Lower leg skin (tissue), 4 donors: ENCODE measurements at regions of chr1 and their contacts with region 1.

Region 1: DNA sequence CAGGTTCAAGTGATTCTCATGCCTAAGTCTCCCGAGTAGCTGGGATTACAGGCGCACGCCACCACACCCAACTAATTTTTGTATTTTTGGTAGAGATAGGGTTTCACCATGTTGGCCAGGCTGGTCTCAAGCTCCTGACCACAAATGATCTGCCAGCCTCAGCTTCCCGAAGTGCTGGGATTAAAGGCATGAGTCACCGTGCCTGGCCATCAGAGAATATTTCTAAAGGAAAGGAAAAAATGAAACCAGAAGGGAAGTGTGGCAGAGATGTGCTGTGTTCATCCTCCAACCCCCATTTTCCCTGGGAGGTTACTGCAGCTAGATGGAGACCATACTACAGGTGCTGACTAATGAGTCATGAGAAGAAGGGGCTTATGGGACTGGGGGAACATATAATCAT is 964.1 kb downstream of the TTLL7 start:
- DNase-seq: no peak
- H3K4me3 ChIP-seq: no peak overlapping the region
- CTCF ChIP-seq: no peak
- POLR2A ChIP-seq: no peak

Region 2: DNA sequence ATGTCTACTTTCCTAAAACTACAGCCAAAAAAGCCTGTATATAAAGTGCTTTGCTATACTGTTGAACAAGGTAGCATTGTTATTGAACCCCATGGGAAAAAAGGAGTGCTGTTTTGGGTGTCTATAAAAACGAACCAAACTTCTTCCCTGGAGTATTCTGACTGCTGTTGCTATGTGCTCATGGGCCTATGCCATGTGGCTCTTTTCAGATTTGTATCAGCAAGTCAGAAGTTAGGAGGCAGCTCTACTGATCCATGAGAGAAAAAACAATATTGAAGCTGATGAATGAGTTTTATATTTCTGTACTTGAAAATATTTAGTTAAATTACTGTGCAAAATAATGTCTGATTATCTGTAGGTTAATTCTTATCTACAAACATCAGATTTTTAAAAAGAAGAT is 1167.6 kb before region 1 on chr1:
- intact Hi-C with region 1: loop called (anchors 5 kb)
- DNase-seq: no peak
- H3K4me3 ChIP-seq: no peak overlapping the region
- CTCF ChIP-seq: no peak
- POLR2A ChIP-seq: no peak

Region 3: GRCh38 chr1:82405333-82405732 is 629.5 kb before region 1 on chr1:
- intact Hi-C with region 1: no loop called
- DNase-seq: no peak
- H3K4me3 ChIP-seq: no peak overlapping the region
- CTCF ChIP-seq: no peak
- POLR2A ChIP-seq: no peak

Region 4: GRCh38 chr1:82819234-82819633 is 215.6 kb before region 1 on chr1:
- intact Hi-C with region 1: no loop called
- DNase-seq: no peak
- H3K4me3 ChIP-seq: no peak overlapping the region
- CTCF ChIP-seq: no peak
- POLR2A ChIP-seq: no peak